ENCODE measurements at regions of chr17 and their contacts with region 1.

Region 1: DNA sequence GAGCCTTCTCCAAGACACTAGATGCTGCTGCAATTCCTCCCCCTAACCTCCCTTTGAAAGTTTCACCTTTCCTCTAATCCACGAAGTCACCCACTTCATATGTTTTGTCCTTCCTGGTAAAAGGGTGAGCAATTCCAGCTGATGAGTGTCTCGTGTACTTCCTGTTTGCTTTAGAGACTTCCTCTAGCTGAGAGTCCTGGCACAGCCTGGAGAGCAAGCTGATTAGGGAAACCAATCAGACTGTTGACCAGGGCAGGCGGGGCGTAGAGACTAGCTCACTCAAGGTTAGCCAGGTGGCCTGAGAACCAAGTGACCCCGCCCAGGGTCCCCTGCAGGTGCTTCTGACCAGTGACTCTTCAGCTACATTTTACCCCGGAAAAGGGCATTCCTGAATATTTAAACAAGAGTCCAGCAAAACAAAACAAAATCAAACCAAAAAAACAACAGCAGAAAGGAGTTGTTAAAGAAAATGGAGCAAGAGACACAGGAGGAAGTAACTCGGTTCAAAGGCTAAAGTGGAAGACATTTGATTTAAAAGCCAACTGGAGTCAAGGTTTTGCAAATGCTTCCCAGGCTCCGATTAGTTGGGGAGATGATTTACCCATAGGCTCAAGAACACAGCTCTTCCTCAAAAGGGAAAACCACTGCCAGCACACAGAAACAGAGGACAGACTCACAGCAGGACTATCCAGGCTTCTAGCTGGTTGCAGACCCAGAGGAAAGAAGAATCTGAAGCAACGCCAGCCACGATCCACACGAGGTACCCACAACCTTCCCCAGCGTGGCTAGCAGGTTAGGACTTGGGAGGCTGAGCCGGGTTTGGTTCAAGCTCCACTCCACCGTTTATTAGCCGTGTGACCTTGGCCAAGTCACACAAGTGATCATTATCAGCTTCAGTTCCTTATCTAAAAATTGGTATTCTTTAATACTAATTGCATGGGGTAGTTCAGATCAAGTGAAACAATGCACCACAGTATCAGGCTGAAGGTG is 13.4 kb downstream of the HSPB9 start:
- DNase-seq: no peak

Region 2: DNA sequence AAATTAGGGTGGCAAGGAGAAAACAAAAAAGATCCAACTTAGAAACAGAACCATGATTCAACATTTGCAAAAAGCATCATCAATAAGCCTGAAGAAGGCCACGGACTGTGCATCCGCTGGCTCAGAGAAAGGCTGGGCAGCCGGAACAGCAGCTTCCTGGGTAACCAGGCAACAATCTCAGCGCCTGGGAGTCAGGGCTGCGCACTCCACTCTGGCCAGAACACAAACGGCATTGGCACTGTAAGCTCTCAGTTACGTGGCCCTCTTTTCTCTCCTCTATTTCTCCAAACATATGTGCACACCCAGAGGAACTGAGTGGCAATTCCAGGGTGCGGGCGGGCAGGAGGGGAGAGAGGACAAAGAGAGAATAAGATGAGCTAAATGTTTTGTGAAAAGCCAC is 64.7 kb after region 1 on chr17:
- in situ Hi-C with region 1: loop called (anchors 5 kb)
- DNase-seq: peak; percentile 81